Activated CD8-positive, alpha-beta T cell treated with anti-CD3 and anti-CD28 coated beads, Interleukin-2, amount 10 ng/mL, durations not matched to agents 7 days and 5 days (primary cell): ENCODE measurements at regions of chr1 and their contacts with region 1.

Region 1: DNA sequence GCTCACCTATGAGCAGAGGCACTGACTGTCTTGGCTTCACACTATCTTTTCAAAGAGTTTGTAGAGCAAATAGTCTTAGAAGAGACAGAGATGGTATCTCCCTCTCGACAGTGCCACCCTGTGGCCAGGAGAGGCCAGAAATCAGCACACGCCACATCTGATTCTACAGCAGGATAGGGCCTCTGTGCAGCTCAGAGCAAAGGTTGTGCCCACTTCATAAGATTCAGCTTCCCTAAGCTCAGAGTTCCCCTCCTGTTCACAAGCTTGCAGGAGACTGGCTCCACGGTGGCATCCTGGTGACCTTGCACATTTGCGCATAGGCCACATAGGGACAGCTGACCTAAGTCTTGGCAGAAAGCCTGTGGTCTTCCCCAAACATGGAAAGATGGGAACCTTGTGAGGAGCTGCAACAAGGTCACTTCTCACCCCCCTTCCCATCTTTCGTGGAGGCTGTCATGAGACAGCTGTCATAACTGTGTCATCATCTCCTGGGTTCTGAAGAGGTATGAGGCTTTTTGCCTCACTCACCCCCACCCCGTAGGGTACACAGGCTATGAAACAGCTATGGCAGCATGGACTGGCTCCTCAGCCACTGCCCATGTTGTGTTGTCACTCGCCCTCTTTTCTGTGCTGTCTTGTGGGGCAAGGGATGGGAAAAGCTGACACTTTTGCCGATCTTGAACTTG is 3.0 kb downstream of the ITLN2 start:
- DNase-seq: peak; percentile 87
- ATAC-seq: peak; percentile 88
- H3K4me3 Mint-ChIP-seq: no peak overlapping the region
- H3K27ac Mint-ChIP-seq: no peak overlapping the region
- H3K4me1 Mint-ChIP-seq: peaks cover 22% of the 10 kb centered on the region
- H3K27me3 Mint-ChIP-seq: no peaks in the 10 kb centered on the region

Region 2: GRCh38 chr1:160711602-160712311 is 239.8 kb before region 1 on chr1 and contains the start of gene CD48:
- CTCF ChIA-PET with region 1: interaction called, 25 read pairs
- POLR2A ChIA-PET with region 1: no interaction called
- DNase-seq: peak; percentile 79
- ATAC-seq: peak; percentile 48
- H3K4me3 Mint-ChIP-seq: no peak within 1 kb of the TSS
- H3K27ac Mint-ChIP-seq: no peak within 1 kb of the TSS
- H3K4me1 Mint-ChIP-seq: peaks cover 39% of the 10 kb centered on the region
- H3K27me3 Mint-ChIP-seq: no peaks in the 10 kb centered on the region
- total RNA-seq, gene CD48: 325 to 327 TPM

Region 3: DNA sequence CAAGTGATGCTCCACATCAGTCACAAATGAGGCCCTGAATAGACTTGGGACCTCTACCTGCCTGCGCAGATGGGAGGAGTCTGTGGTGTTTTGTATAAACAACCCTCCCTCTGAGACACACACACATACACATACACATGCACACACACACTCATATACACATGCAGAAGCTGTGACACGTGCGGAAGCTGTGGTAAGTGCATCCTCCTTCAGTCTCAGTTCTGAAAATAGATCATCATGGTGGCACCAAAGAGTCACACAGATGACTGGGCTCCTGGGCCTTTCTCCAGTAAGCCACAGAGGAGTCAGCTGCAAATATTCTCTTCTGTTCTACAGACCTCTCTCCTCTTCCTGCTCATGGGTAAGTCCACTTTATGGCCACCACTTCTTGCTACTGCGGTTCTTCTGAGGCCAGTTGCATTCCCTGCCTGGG is 155.6 kb before region 1 on chr1 and contains the start of gene LY9:
- CTCF ChIA-PET with region 1: interaction called, 50 read pairs
- POLR2A ChIA-PET with region 1: no interaction called
- DNase-seq: peak; percentile 89
- ATAC-seq: peak; percentile 85
- H3K4me3 Mint-ChIP-seq: peak within 1 kb of the TSS; percentile 88
- H3K27ac Mint-ChIP-seq: peak within 1 kb of the TSS; percentile 95
- H3K4me1 Mint-ChIP-seq: peaks cover 62% of the 10 kb centered on the region
- H3K27me3 Mint-ChIP-seq: no peaks in the 10 kb centered on the region
- total RNA-seq, gene LY9: 24.7 to 24.9 TPM

Region 4: DNA sequence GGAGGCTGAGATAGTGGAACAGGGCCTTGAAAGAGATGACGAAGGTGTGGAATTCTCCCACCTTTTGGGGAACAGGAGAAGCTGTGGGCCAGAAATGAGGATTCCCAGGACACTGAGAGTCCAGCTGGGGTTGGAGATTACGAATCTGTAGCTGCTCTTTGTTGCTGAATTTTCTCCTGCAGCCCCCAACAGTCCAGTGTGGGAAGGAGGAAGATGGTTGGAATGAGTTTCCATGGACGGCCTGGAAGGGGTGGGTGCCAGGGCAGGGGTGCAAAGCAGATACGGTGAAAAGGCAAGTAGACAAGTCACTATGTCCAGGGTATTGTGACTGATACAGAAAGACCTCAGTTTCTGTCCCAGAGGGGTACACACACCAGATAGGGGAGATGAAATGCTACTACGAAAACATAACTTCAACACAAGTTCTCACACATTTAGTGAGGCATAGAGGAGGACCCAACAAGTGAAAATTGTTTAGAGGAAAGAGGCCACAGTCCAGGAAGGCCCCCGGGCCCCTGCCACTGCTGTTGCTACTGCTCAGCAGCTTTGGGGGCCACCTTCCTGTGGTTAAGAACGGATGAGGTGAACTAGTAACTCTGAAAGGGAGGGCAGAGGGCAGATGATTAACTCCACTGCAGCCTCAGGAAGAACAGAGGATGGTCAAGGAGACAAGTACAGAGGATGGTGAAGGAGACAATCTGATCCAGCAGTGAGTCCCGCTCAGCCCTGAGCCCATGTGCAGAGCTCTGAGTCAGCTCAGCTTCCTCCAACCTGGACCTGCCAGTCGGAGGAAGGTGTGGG is 96.2 kb before region 1 on chr1:
- CTCF ChIA-PET with region 1: interaction called, 18 read pairs
- POLR2A ChIA-PET with region 1: no interaction called
- DNase-seq: peak; percentile 71
- ATAC-seq: peak; percentile 77
- H3K4me3 Mint-ChIP-seq: no peak overlapping the region
- H3K27ac Mint-ChIP-seq: no peak overlapping the region
- H3K4me1 Mint-ChIP-seq: peaks cover 27% of the 10 kb centered on the region
- H3K27me3 Mint-ChIP-seq: no peaks in the 10 kb centered on the region

Region 5: GRCh38 chr1:160975026-160975425 is 23.4 kb after region 1 on chr1:
- CTCF ChIA-PET with region 1: interaction called, 15 read pairs
- POLR2A ChIA-PET with region 1: no interaction called
- DNase-seq: no peak
- ATAC-seq: no peak
- H3K4me3 Mint-ChIP-seq: no peak overlapping the region
- H3K27ac Mint-ChIP-seq: no peak overlapping the region
- H3K4me1 Mint-ChIP-seq: peaks cover 6% of the 10 kb centered on the region
- H3K27me3 Mint-ChIP-seq: peaks cover 13% of the 10 kb centered on the region

Region 6: GRCh38 chr1:161139765-161140164 is 188.2 kb after region 1 on chr1:
- CTCF ChIA-PET with region 1: interaction called, 10 read pairs
- POLR2A ChIA-PET with region 1: no interaction called
- DNase-seq: peak; percentile 64
- ATAC-seq: peak; percentile 70
- H3K4me3 Mint-ChIP-seq: no peak overlapping the region
- H3K27ac Mint-ChIP-seq: no peak overlapping the region
- H3K4me1 Mint-ChIP-seq: peaks cover 9% of the 10 kb centered on the region
- H3K27me3 Mint-ChIP-seq: no peaks in the 10 kb centered on the region